MCF 10A (cell line): ENCODE measurements at regions of chr2 and their contacts with region 1.

Region 1: DNA sequence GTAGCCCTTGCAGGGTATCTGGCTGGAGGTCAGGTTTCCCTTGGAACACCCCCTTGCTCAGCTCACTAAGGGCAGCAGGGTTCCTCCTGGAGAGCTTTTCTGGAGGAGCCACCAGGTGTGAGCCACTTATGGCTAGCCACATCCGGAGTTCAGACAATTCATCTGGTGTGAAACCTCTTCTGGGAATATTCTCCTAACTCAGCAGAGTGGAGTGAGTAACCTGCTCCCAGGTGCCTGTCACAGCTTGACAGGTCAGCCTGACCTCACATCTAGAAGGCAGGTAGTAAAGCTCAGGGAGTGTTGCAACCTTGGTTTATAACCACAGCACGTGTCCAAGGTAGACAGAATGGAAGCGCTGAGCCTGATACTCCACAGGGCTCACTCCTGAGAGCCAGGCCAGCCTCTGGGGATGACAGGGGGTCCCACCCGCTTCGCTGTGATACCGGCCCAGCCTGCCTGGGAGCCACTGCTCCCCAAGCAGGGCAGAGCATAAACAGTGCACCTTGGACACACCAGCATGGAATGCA is 62.6 kb upstream of the TGFA start:
- DNase-seq: peak; percentile 94
- H3K4me3 Mint-ChIP-seq: no peak overlapping the region
- H3K27ac Mint-ChIP-seq: no peak overlapping the region
- H3K4me1 Mint-ChIP-seq: no peaks in the 10 kb centered on the region
- H3K27me3 Mint-ChIP-seq: peaks cover 8% of the 10 kb centered on the region
- CTCF ChIP-seq: no peak

Region 2: GRCh38 chr2:70301344-70302194 is 314.7 kb before region 1 on chr2 and contains the start of gene FAM136A:
- CTCF ChIA-PET with region 1: interaction called, 22 read pairs
- POLR2A ChIA-PET with region 1: interaction called, 23 read pairs
- intact Hi-C with region 1: loop called (anchors 1 kb)
- DNase-seq: peak; percentile 75
- H3K4me3 Mint-ChIP-seq: peak within 1 kb of the TSS; percentile 91
- H3K27ac Mint-ChIP-seq: peak within 1 kb of the TSS; percentile 85
- H3K4me1 Mint-ChIP-seq: no peaks in the 10 kb centered on the region
- H3K27me3 Mint-ChIP-seq: no peaks in the 10 kb centered on the region
- CTCF ChIP-seq: peak; percentile 97
- total RNA-seq, gene FAM136A: 38.8 and 43.8 TPM in 2 replicates

Region 3: GRCh38 chr2:70340921-70341765 is 275.1 kb before region 1 on chr2:
- CTCF ChIA-PET with region 1: interaction called, 65 read pairs
- POLR2A ChIA-PET with region 1: interaction called, 11 read pairs
- intact Hi-C with region 1: loop called (anchors 1 kb)
- DNase-seq: peak; percentile 82
- H3K4me3 Mint-ChIP-seq: no peak overlapping the region
- H3K27ac Mint-ChIP-seq: no peak overlapping the region
- H3K4me1 Mint-ChIP-seq: peaks cover 17% of the 10 kb centered on the region
- H3K27me3 Mint-ChIP-seq: no peaks in the 10 kb centered on the region
- CTCF ChIP-seq: peak; percentile 81

Region 4: DNA sequence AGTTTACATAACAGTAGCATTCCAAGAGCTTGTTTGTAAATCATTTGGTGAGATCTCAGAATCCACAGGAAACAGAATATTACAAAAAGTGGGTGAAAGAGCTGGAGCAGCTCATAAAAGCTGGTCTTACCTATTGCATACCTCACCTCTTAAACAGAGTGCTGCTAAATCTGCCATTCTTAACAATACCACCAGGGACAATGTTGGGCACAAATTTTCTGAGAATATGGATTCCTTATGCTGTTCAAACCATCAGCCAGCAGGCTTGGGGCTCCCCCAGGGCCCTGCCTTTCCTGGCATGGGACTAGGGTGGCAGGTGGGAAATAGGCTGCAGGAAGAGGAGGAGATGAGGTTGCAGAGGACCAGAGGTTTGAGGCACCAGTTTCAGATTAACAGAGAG is 118.2 kb before region 1 on chr2:
- CTCF ChIA-PET with region 1: interaction called, 13 read pairs
- POLR2A ChIA-PET with region 1: no interaction called
- intact Hi-C with region 1: no loop called
- DNase-seq: peak; percentile 40
- H3K4me3 Mint-ChIP-seq: no peak overlapping the region
- H3K27ac Mint-ChIP-seq: no peak overlapping the region
- H3K4me1 Mint-ChIP-seq: peaks cover 6% of the 10 kb centered on the region
- H3K27me3 Mint-ChIP-seq: no peaks in the 10 kb centered on the region
- CTCF ChIP-seq: peak; percentile 13

Region 5: DNA sequence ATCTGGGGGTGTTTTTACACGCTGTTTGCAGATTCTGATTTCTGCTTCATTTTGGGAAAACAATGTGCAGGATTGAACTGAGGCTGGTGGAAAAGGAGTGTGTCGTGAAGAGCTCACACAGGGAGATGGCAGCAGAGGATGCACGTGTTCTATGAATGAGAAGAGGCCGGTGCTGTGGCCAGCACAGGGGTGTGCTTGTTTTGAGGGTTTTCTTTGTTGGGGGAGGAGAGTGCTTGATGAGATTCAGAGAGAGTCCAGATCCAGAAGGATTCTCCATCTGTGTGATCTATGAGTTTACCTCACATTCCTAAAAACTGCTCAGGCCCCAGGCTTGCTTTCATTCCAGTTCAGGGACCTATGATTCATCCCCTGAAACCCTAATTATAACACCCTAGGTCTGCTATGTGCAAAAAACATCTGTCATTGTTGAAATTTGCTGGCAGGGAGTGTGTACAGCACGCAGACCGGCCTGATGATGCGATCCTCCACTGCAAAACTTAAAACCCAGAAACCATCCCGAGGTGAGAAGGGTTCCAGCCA is 74.7 kb before region 1 on chr2:
- CTCF ChIA-PET with region 1: interaction called, 11 read pairs
- POLR2A ChIA-PET with region 1: interaction called, 8 read pairs
- intact Hi-C with region 1: loop called (anchors 1 kb)
- DNase-seq: peak; percentile 87
- H3K4me3 Mint-ChIP-seq: peak overlapping the region; percentile 56
- H3K27ac Mint-ChIP-seq: peak overlapping the region; percentile 76
- H3K4me1 Mint-ChIP-seq: peaks cover 24% of the 10 kb centered on the region
- H3K27me3 Mint-ChIP-seq: no peaks in the 10 kb centered on the region
- CTCF ChIP-seq: peak; percentile 19

Region 6: DNA sequence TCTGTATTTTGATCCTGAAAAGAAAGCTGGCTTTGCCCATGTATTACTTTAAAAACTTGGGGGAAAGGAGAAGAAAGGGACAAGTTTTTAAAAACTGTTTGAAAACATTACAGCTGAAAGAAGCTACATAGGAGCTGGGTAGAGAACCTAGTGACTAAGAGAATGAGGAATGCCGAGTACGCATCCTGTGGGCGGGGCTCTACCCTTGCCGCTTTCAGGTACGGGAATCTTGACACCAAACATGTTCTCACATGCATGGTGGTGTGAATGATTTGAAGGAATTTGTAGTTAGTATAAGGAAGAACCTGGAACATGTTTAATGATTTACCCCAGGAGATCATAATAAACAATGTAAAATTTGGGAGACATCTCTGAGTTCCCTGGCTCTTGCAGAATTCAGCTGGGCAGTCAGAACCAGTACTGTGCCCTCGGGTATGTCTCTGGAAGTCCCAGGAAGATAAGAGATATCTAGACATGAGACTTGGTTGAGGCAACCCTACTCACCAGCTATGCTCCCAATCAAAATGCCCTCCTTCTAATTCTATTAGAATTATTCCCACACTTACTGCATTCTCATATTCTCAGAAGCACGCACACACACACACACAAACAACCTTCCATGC is 46.1 kb before region 1 on chr2:
- CTCF ChIA-PET with region 1: interaction called, 7 read pairs
- POLR2A ChIA-PET with region 1: interaction called, 20 read pairs
- intact Hi-C with region 1: no loop called
- DNase-seq: peak; percentile 94
- H3K4me3 Mint-ChIP-seq: peak overlapping the region; percentile 5
- H3K27ac Mint-ChIP-seq: peak overlapping the region; percentile 93
- H3K4me1 Mint-ChIP-seq: peaks cover 33% of the 10 kb centered on the region
- H3K27me3 Mint-ChIP-seq: no peaks in the 10 kb centered on the region
- CTCF ChIP-seq: no peak

Region 7: DNA sequence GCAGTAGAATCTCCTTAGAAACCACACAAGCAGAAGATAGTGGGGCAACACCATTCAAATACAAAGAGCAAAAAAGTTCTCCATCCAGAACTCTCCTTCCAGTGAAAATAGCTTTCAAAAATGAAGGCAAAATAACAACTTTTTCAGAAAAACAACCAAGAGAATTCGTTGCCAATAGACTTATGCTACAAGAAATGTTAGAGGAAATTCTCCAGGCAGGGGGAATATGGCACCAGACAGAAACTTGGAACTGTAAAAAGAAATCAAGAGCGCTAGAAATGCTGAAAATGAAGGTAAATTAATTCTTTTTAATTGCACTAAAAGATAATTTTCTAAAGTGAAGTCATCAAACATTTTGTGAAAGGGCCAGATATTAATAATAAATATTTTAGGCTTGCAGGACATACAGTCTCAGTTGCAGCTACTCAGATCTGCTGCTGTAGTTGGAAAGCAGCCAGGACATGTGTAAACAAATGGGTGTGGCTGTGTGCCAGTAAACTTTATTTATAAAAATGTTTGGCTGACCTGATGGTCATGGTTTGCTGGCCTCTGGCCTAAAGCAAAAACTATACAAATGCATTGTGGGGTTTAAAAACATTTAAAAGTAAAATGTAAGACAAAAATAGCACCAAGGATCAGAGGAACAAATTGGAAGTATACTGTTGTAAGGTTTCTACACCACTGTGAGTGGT is 11.1 kb after region 1 on chr2:
- CTCF ChIA-PET with region 1: interaction called, 11 read pairs
- POLR2A ChIA-PET with region 1: no interaction called
- intact Hi-C with region 1: no loop called
- DNase-seq: peak; percentile 72
- H3K4me3 Mint-ChIP-seq: no peak overlapping the region
- H3K27ac Mint-ChIP-seq: no peak overlapping the region
- H3K4me1 Mint-ChIP-seq: no peaks in the 10 kb centered on the region
- H3K27me3 Mint-ChIP-seq: peaks cover 2% of the 10 kb centered on the region
- CTCF ChIP-seq: no peak

Region 8: GRCh38 chr2:70871398-70872211 is 255.4 kb after region 1 on chr2:
- CTCF ChIA-PET with region 1: no interaction called
- POLR2A ChIA-PET with region 1: no interaction called
- intact Hi-C with region 1: no loop called
- DNase-seq: peak; percentile 75
- H3K4me3 Mint-ChIP-seq: peak overlapping the region; percentile 18
- H3K27ac Mint-ChIP-seq: no peak overlapping the region
- H3K4me1 Mint-ChIP-seq: peaks cover 6% of the 10 kb centered on the region
- H3K27me3 Mint-ChIP-seq: peaks cover 34% of the 10 kb centered on the region
- CTCF ChIP-seq: peak; percentile 92